Aorta (tissue), 5 donors: ENCODE measurements at regions of chr6 and their contacts with region 1.

Region 1: GRCh38 chr6:90098001-90098531 is 198.6 kb downstream of the BACH2 start:
- DNase-seq: peak; percentile 76 to 86
- ATAC-seq: peak; percentile 92
- H3K4me3 ChIP-seq: no peak overlapping the region
- H3K27ac ChIP-seq: peak overlapping the region in 1 of 2 donors; percentile 86
- H3K4me1 ChIP-seq: peaks cover 6 to 13% of the 10 kb centered on the region in 2 donors
- H3K27me3 ChIP-seq: no peaks in the 10 kb centered on the region

Region 2: GRCh38 chr6:89970609-89971337 is 127.3 kb before region 1 on chr6:
- intact Hi-C with region 1: loop called in 1 of 2 experiments (anchors 10 kb)
- DNase-seq: no peak
- ATAC-seq: peak; percentile 63
- H3K4me3 ChIP-seq: no peak overlapping the region
- H3K27ac ChIP-seq: no peak overlapping the region
- H3K4me1 ChIP-seq: no peaks in the 10 kb centered on the region
- H3K27me3 ChIP-seq: no peaks in the 10 kb centered on the region

Region 3: DNA sequence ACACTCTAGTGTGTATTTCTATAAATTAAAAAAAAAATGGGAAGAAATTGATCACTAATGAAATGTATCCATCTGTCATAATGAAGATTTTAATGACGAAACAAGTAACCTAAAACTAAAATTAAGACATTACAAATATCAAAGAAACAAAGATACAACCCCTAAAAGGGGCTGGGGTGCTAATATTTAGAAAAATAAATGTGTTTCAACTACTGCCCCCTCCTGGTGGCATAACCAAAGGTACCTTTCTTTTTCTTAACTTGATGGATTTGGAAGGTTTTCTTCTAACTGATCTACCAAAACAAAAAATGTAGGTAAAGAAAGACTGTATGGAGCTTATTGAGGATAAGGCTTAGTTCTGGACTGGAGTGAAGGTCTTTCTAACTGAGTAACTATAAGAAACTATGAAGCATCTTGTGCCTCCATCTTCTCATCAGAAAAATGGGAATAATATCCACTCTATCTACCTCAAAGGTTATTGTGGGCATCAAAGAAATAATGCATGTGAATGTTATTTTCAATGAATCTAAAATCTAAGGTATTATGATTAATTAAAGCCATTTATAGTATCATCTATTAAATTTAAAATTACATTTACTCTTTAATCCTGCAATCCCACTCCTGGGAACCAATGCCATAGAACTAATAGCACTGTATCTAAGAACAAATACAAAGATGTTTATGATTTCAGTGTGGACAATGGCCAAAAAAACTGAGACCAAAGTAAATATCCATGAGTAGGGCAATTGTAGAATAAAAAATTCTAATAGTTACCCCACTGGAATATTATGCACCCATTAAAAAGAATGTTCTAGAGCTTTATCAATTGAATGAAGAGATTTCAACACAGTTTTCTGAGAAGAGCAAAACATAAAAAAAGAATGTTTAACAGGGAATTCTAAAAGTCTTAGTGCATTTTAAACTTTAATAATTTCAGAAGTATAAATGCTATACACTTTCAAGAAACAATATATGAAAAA is 81.4 kb after region 1 on chr6:
- intact Hi-C with region 1: loop called (anchors 5 kb)
- DNase-seq: no peak
- ATAC-seq: no peak
- H3K4me3 ChIP-seq: no peak overlapping the region
- H3K27ac ChIP-seq: no peak overlapping the region
- H3K4me1 ChIP-seq: peaks cover 9% of the 10 kb centered on the region in 2 donors
- H3K27me3 ChIP-seq: no peaks in the 10 kb centered on the region

Region 4: DNA sequence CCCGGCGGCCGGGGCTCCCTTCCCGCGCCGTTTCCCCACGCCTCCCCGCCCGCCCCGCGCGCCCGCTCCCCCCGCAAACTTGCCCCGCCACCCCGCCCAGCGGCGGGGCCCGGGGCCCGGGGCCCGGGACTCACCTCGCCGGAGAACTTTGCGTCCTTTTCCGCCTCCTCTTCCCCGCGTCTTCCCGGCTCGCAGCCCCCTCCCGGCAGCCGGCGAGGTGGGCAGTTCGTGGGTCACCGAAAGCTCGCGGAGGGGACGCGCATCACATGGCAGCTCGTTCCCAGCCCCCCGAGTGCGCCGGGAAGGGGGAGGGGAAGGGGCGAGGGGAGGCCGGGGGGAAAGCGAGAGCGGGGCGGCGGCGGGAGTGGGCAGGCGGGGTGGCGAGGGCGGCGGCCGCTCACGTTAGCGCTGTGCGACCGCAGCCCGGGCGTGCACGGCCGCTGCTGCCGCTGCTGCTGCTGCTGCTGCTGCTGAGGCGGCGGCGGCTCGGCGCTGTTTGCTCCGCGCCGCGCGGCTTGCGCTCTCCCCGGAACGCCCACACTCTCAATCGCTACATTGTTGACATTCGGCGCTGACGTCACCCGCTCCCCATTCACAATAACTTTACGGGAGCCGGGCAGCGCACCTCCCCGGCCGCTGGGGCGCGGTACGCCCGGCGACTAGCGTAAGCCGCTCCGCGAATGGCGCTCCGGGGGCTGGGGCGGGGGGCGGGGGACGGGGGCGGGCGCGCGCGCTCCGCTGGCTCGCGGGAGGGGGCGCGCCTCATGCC is 198.5 kb after region 1 on chr6 and contains the start of gene BACH2:
- intact Hi-C with region 1: loop called (anchors 5 kb)
- DNase-seq: peak; percentile 92 to 96
- ATAC-seq: peak; percentile 76
- H3K4me3 ChIP-seq: peak within 1 kb of the TSS; percentile 22 to 86
- H3K27ac ChIP-seq: peak within 1 kb of the TSS; percentile 68 to 97
- H3K4me1 ChIP-seq: no peaks in the 10 kb centered on the region
- H3K27me3 ChIP-seq: no peaks in the 10 kb centered on the region
- total RNA-seq, gene BACH2: 11.6 to 22.2 TPM

Region 5: DNA sequence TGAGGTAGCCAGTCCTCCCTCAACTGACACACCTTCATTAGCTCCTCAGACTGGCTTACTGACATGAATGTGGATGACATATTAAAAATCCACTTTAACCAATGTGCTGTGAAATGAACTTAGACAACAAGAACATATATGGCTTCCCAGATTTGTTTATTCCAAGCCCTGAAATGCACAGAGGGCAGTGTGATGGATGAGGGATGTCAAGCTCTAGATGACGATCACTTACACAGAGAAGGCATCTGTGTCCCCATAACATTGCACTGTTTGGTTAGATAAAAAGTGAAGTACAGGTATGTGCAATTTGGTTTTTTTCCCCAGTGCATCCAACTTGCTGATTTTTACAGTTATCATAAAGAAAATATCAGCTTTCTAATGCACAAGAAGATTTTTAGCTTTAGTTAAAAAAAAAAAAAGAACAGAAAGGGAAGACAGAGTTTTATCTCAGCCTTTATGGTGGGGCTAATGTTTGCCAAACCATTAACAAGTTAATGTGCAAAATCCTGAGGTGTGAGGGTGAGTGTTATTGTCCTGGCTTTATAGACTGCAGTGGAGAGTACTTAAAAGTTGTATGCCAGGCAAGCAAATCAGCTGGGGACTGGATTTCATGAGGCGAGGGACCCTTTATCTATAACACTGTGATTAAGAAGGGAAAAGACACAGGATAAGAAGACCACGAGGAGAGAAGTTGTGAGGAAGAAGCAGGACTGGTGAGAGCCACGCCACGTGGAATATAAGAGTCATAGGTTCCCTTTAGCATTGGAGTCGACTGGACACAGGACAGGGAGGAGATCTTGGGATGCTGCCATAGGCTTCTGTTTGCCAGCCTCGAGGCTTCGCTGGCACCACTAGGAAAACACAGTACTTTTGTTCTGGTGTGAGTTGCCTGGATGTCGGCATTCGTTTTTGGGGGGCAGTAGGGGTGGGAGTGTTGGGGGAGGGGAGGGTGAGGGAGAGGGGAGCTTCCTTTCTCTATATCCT is 288.6 kb after region 1 on chr6:
- intact Hi-C with region 1: loop called (anchors 5 kb)
- DNase-seq: no peak
- ATAC-seq: no peak
- H3K4me3 ChIP-seq: no peak overlapping the region
- H3K27ac ChIP-seq: no peak overlapping the region
- H3K4me1 ChIP-seq: peaks cover 0 to 4% of the 10 kb centered on the region in 2 donors
- H3K27me3 ChIP-seq: no peaks in the 10 kb centered on the region

Region 6: GRCh38 chr6:90478789-90479602 is 380.9 kb after region 1 on chr6:
- intact Hi-C with region 1: loop called in 1 of 2 experiments (anchors 10 kb)
- DNase-seq: peak; percentile 91 to 93
- ATAC-seq: peak; percentile 97
- H3K4me3 ChIP-seq: no peak overlapping the region
- H3K27ac ChIP-seq: no peak overlapping the region
- H3K4me1 ChIP-seq: no peaks in the 10 kb centered on the region
- H3K27me3 ChIP-seq: no peaks in the 10 kb centered on the region